GM23248 (cell line): ENCODE measurements at regions of chr9 and their contacts with region 1.

Region 1: GRCh38 chr9:83334320-83334719 is 203.9 kb downstream of the FRMD3 start:
- DNase-seq: peak; percentile 89
- H3K4me3 ChIP-seq: no peak overlapping the region
- H3K27ac ChIP-seq: no peak overlapping the region
- H3K4me1 ChIP-seq: 0 out of 2 replicates have a peak, but pooled peaks cover 3% of the 10 kb centered on the region
- H3K27me3 ChIP-seq: no peaks in the 10 kb centered on the region

Region 2: GRCh38 chr9:83538172-83538889 is 204.0 kb after region 1 on chr9 and contains the start of gene FRMD3:
- in situ Hi-C with region 1: loop called (anchors 10 kb)
- DNase-seq: peak; percentile 78
- H3K4me3 ChIP-seq: peak within 1 kb of the TSS; percentile 67
- H3K27ac ChIP-seq: no peak within 1 kb of the TSS
- H3K4me1 ChIP-seq: no peaks in the 10 kb centered on the region
- H3K27me3 ChIP-seq: 0 out of 2 replicates have a peak, but pooled peaks cover 3% of the 10 kb centered on the region
- total RNA-seq, gene FRMD3: 0.13 and 0.32 TPM in 2 replicates